Activated CD4-positive, alpha-beta T cell treated with anti-CD3 and anti-CD28 coated beads, Interleukin-2, amount 10 ng/mL, durations not matched to agents 7 days and 5 days (primary cell): ENCODE measurements at regions of chr14 and their contacts with region 1.

Region 1: GRCh38 chr14:74244115-74244514 is 4.9 kb downstream of the VSX2 start:
- DNase-seq: no peak
- H3K4me3 Mint-ChIP-seq: no peak overlapping the region
- H3K27ac Mint-ChIP-seq: no peak overlapping the region
- H3K4me1 Mint-ChIP-seq: peaks cover 18% of the 10 kb centered on the region
- H3K27me3 Mint-ChIP-seq: peaks cover 67% of the 10 kb centered on the region

Region 2: DNA sequence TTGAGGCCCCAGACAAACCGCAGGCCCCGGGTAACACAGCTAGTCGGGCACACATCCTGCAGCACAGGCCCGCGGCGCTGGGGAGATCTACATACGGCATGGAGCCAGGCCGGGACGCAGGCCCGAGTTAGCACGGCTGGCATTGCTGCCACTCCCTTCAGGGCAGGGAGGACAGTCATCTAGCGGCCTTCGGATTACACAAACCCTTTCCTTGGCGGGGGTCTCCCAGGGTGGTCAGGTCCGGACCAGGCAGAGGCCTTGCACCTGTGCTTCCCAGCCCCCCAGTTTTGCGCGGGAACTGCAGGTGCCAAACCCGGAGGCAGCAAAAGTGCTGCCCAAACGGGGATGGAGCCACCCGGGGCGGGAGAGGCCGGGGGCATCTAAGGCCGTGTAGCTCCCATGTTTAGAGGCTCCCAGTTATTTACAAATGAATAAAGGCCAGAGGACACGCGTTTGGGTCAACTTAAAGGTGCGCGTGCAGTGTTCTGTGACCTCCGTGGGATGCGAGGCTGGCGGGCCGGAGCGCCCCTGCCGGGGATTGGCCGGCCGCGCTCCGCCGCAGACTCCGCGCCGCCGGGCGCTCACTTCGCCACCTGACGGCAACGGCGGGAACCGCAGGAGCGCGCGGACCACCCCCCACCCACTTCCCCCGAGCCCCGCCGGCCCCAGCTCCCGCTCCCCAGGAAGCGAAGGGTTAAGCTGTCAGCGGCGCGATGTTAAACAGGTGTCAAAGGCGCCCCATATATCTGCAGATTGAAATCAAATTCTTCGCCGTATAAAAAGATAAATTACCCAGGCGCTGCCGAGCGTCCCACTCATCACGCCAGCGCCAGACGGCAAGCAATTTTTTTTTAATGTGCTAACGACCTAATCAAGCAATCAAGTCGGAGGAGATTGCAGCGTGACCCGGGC is 13.2 kb after region 1 on chr14:
- CTCF ChIA-PET with region 1: interaction called, 28 read pairs
- POLR2A ChIA-PET with region 1: no interaction called
- DNase-seq: peak; percentile 44
- H3K4me3 Mint-ChIP-seq: peak overlapping the region; percentile 75
- H3K27ac Mint-ChIP-seq: no peak overlapping the region
- H3K4me1 Mint-ChIP-seq: peaks cover 8% of the 10 kb centered on the region
- H3K27me3 Mint-ChIP-seq: peaks cover 17% of the 10 kb centered on the region

Region 3: GRCh38 chr14:74456684-74457564 is 212.8 kb after region 1 on chr14:
- CTCF ChIA-PET with region 1: no interaction called
- POLR2A ChIA-PET with region 1: no interaction called
- DNase-seq: no peak
- H3K4me3 Mint-ChIP-seq: no peak overlapping the region
- H3K27ac Mint-ChIP-seq: peak overlapping the region; percentile 64
- H3K4me1 Mint-ChIP-seq: no peaks in the 10 kb centered on the region
- H3K27me3 Mint-ChIP-seq: peaks cover 20% of the 10 kb centered on the region